ENCODE measurements at regions of chr2 and their contacts with region 1.

Region 1: GRCh38 chr2:58046585-58047372 is at the start of gene VRK2:
- DNase-seq: peak; percentile 95
- total RNA-seq, gene VRK2: 20.0 TPM

Region 2: GRCh38 chr2:57674743-57675420 is 371.9 kb before region 1 on chr2:
- intact Hi-C with region 1: no loop called
- DNase-seq: no peak

Region 3: DNA sequence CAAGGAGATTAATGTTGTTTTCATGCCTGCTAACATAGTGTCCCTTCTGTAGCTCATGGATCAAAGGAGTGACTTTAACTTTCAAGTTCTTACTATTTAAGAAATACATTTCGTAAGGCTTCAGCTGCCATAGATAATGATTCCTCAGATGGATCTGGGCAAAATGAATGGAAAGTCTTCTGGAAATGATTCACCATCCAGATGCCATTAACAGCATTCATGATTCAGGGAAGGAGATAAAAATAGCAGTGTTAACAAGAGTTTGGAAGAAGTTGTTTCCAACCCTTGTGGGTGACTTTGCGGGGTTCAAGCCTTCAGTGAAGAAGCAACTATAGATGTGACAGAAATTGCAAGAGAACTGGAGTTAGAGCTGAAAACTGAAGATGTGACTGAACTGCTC is 16.9 kb after region 1 on chr2:
- intact Hi-C with region 1: no loop called
- DNase-seq: no peak

Region 4: GRCh38 chr2:58240670-58241545 is 194.1 kb after region 1 on chr2 and contains the start of gene FANCL:
- intact Hi-C with region 1: loop called (anchors 2 kb)
- DNase-seq: peak; percentile 93
- total RNA-seq, gene FANCL: 11.4 TPM

Region 5: DNA sequence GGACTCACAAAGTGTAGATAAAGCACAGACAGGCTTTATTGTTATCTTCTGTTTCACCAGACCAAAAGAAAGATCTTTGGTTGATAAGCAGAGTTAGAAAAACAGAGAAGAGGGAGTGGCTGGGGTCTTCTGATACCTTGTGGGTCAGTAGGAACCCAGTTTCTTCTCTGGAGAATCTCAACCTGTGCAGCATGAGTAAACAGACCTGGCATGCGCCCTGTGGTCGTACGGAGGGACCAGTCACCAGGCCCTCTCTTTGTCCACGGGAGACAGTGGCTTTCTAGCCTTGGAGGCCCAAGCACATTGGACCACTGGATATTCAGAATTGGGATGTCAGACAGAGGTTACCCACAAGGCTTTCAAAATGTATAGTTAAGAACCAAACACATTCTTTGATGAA is 613.3 kb after region 1 on chr2:
- intact Hi-C with region 1: no loop called
- DNase-seq: no peak

Measured in cardiac septum (tissue), 1 donor.